ENCODE measurements at regions of chr6 and their contacts with region 1.

Region 1: GRCh38 chr6:119349323-119350042 is at the start of gene MAN1A1:
- DNase-seq: peak; percentile 97
- H3K4me3 ChIP-seq: peak within 1 kb of the TSS; percentile 75 to 97 (median 96)
- H3K27ac ChIP-seq: peak within 1 kb of the TSS; percentile 96 to 98 (median 98)
- H3K4me1 ChIP-seq: peaks cover 10 to 57% (median 41%) of the 10 kb centered on the region in 4 donors
- H3K27me3 ChIP-seq: no peaks in the 10 kb centered on the region
- CTCF ChIP-seq: no peak
- EP300 ChIP-seq: no peak
- POLR2A ChIP-seq: peak; percentile 84
- total RNA-seq, gene MAN1A1: 79.4 to 125 (median 101) TPM

Region 2: GRCh38 chr6:119147101-119148053 is 202.1 kb before region 1 on chr6:
- intact Hi-C with region 1: loop called (anchors 5 kb)
- DNase-seq: peak; percentile 91
- H3K4me3 ChIP-seq: no peak overlapping the region
- H3K27ac ChIP-seq: peak overlapping the region in 3 of 4 donors; percentile 44 to 77 (median 53)
- H3K4me1 ChIP-seq: peaks cover 14 to 41% (median 28%) of the 10 kb centered on the region in 4 donors
- H3K27me3 ChIP-seq: no peaks in the 10 kb centered on the region
- CTCF ChIP-seq: no peak
- EP300 ChIP-seq: no peak
- POLR2A ChIP-seq: no peak

Region 3: GRCh38 chr6:119205911-119206618 is 143.4 kb before region 1 on chr6:
- intact Hi-C with region 1: no loop called
- DNase-seq: no peak
- H3K4me3 ChIP-seq: no peak overlapping the region
- H3K27ac ChIP-seq: no peak overlapping the region
- H3K4me1 ChIP-seq: peaks cover 0 to 32% (median 24%) of the 10 kb centered on the region in 4 donors
- H3K27me3 ChIP-seq: no peaks in the 10 kb centered on the region
- CTCF ChIP-seq: no peak
- EP300 ChIP-seq: no peak
- POLR2A ChIP-seq: no peak

Region 4: DNA sequence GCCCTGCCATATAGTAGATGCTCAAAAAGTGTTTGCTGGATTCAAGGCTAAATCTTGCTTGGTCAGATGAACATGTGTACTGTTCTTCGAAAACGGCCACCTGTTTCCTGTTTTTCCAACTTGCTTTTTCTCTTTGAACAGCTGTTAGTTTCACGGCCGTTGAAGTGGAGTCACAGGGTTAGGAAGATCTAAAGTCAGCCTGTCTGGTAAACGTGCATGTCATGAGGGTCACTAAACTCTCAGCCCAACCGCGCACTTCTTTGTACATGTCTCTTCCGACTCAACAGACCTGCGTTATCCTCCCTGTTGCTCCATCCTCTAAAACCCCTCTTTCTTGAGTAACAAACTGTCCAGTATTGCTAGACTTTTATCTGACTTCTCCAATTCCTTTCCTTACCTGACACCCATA is 93.3 kb after region 1 on chr6:
- intact Hi-C with region 1: loop called (anchors 10 kb)
- DNase-seq: no peak
- H3K4me3 ChIP-seq: no peak overlapping the region
- H3K27ac ChIP-seq: peak overlapping the region in 1 of 4 donors; percentile 42
- H3K4me1 ChIP-seq: peaks cover 6 to 22% (median 17%) of the 10 kb centered on the region in 4 donors
- H3K27me3 ChIP-seq: no peaks in the 10 kb centered on the region
- CTCF ChIP-seq: no peak
- EP300 ChIP-seq: no peak
- POLR2A ChIP-seq: no peak

Region 5: GRCh38 chr6:119541132-119541905 is 191.8 kb after region 1 on chr6:
- intact Hi-C with region 1: loop called (anchors 5 kb)
- DNase-seq: no peak
- H3K4me3 ChIP-seq: no peak overlapping the region
- H3K27ac ChIP-seq: peak overlapping the region; percentile 50 to 76 (median 71)
- H3K4me1 ChIP-seq: peaks cover 5 to 35% (median 26%) of the 10 kb centered on the region in 4 donors
- H3K27me3 ChIP-seq: no peaks in the 10 kb centered on the region
- CTCF ChIP-seq: no peak
- EP300 ChIP-seq: no peak
- POLR2A ChIP-seq: no peak

Measured in esophagus muscularis mucosa (tissue), 4 donors.